Sigmoid colon (tissue), 7 donors: ENCODE measurements at regions of chr10 and their contacts with region 1.

Region 1: GRCh38 chr10:42753126-42753506 is 29.5 kb upstream of the BMS1 start:
- DNase-seq: peak; percentile 87
- H3K4me3 ChIP-seq: peak overlapping the region; percentile 37 to 65 (median 54)
- H3K27ac ChIP-seq: peak overlapping the region; percentile 35 to 70 (median 46)
- H3K4me1 ChIP-seq: peaks cover 0 to 33% (median 23%) of the 10 kb centered on the region in 4 donors
- H3K27me3 ChIP-seq: peaks cover 24 to 45% (median 33%) of the 10 kb centered on the region in 3 donors
- CTCF ChIP-seq: peak; percentile 58 to 87 (median 77)
- EP300 ChIP-seq: no peak
- POLR2A ChIP-seq: no peak

Region 2: DNA sequence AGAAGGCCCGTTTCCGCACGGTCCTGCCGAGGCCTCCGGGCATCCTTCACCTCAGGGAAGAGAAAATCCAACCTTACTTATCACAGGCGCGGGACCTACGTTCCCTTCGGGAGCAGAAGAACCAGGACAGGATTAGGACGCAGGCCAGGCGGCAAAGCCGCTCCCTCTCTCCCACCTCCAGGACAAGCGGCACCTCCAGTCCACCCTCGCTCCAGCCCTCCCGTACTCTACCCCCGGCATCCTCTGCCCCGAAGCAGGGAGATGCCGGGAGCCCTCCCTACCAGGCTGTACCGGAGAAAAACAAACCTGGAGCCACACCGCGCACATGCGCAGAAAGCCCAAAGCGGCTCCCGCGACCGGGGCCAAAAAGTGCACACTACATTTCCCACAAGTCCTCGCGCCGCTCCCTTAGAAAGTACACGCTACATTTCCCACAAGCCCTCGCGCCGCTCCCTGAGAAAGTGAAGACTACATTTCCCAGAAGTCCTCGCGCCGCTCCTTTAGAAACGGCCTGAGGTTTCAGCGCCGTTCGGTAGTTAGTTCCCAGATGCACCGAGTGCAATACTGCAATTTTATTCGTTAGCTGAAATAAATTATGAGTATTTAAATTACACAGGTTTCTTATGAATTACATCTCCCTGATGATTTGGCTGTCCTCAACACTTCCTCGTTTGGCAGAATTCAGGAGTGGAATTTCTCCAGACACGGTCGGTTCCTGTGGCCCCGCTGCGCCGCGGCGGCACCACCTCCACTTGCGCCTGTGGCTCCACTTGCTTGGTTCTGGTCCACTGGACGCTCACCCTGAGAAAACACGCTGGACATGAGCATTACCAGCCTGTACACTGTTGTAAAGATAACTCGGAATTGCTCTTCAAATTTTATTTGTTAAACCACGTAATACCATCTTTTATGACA is 200.4 kb before region 1 on chr10:
- intact Hi-C with region 1: loop called (anchors 10 kb)
- DNase-seq: peak; percentile 97
- H3K4me3 ChIP-seq: peak overlapping the region; percentile 60 to 87 (median 77)
- H3K27ac ChIP-seq: peak overlapping the region; percentile 77 to 83 (median 80)
- H3K4me1 ChIP-seq: peaks cover 0 to 23% (median 21%) of the 10 kb centered on the region in 4 donors
- H3K27me3 ChIP-seq: no peaks in the 10 kb centered on the region
- CTCF ChIP-seq: no peak
- EP300 ChIP-seq: no peak
- POLR2A ChIP-seq: no peak

Region 3: GRCh38 chr10:42782446-42783180 is 29.5 kb after region 1 on chr10 and contains the start of gene BMS1:
- intact Hi-C with region 1: loop called (anchors 1 kb)
- DNase-seq: peak; percentile 94
- H3K4me3 ChIP-seq: peak within 1 kb of the TSS; percentile 55 to 74 (median 64)
- H3K27ac ChIP-seq: peak within 1 kb of the TSS; percentile 88 to 96 (median 90)
- H3K4me1 ChIP-seq: peaks cover 0 to 18% (median 13%) of the 10 kb centered on the region in 4 donors
- H3K27me3 ChIP-seq: peaks cover 0 to under 1% (median 0%) of the 10 kb centered on the region in 3 donors
- CTCF ChIP-seq: no peak
- EP300 ChIP-seq: no peak
- POLR2A ChIP-seq: peak; percentile 45 to 61
- total RNA-seq, gene BMS1: 12.2 to 14.3 (median 13.3) TPM

Region 4: GRCh38 chr10:43037935-43038782 is 285.0 kb after region 1 on chr10:
- intact Hi-C with region 1: no loop called
- DNase-seq: peak; percentile 42
- H3K4me3 ChIP-seq: no peak overlapping the region
- H3K27ac ChIP-seq: no peak overlapping the region
- H3K4me1 ChIP-seq: peaks cover 0 to 6% (median 0%) of the 10 kb centered on the region in 4 donors
- H3K27me3 ChIP-seq: no peaks in the 10 kb centered on the region
- CTCF ChIP-seq: no peak
- EP300 ChIP-seq: no peak
- POLR2A ChIP-seq: no peak

Region 5: DNA sequence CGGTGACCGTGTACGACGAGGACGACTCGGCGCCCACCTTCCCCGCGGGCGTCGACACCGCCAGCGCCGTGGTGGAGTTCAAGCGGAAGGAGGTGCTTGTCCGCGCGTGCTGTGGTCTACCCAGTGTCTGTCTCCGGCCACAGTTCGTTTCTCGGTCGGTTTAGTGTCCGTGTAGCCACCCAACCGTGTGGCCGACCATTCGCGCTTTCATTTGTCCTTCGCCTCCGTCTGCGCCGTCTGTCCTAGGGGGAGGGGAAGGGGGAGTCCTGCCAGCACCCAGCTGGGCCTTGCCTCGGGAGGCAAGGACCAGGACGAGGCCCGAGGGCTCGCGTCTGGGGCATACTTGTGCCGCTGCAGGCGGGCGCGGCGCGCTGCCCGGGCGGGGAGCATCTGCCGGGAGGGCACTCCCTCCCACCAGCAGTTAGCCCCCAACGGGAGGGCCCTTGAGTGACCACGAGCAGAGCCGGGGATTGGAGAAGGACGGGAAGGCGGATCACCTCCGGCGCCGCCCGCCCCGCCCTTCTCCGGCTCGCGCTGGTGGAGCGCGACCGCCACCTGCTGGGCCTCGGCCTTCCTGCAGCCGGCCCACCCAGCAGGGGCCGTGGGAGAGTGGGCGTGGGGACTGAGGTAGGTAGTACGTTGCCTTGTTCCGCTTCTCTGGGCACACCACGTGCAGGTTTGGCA is 352.1 kb after region 1 on chr10:
- intact Hi-C with region 1: loop called (anchors 1 kb)
- DNase-seq: peak; percentile 89
- H3K4me3 ChIP-seq: peak overlapping the region; percentile 38 to 60 (median 53)
- H3K27ac ChIP-seq: peak overlapping the region in 1 of 4 donors; percentile 38
- H3K4me1 ChIP-seq: peaks cover 0 to 16% (median 12%) of the 10 kb centered on the region in 4 donors
- H3K27me3 ChIP-seq: peaks cover 4 to 14% (median 6%) of the 10 kb centered on the region in 3 donors
- CTCF ChIP-seq: peak; percentile 97 to 100 (median 99)
- EP300 ChIP-seq: no peak
- POLR2A ChIP-seq: no peak

Region 6: GRCh38 chr10:43353495-43354255 is 600.6 kb after region 1 on chr10:
- intact Hi-C with region 1: no loop called
- DNase-seq: no peak
- H3K4me3 ChIP-seq: no peak overlapping the region
- H3K27ac ChIP-seq: no peak overlapping the region
- H3K4me1 ChIP-seq: peaks cover 0 to 9% (median 2%) of the 10 kb centered on the region in 4 donors
- H3K27me3 ChIP-seq: peaks cover 0 to 17% (median 8%) of the 10 kb centered on the region in 3 donors
- CTCF ChIP-seq: no peak
- EP300 ChIP-seq: no peak
- POLR2A ChIP-seq: no peak